A673 (cell line): ENCODE measurements at regions of chr11 and their contacts with region 1.

Region 1: DNA sequence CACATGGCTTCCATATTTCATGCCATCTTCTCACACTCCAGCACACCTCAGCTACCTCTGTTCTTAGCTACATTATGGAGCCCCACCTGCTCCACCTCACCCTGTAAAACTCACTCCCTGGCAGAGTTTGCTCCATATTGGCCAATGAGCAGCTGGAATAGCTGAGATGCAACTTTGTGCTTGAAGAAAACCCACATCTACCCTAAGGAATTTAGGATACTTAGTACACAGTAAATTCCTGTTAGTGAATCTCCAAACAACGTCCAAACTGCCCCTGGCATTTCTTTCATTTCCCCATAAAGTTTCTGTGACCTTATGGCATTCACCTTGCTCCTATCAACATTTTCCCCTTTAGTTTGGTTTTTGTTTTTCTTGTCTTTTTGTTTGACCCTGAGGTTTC is 2.2 kb upstream of the VWCE start:
- DNase-seq: no peak
- H3K4me3 ChIP-seq: no peak overlapping the region
- H3K27ac ChIP-seq: no peak overlapping the region
- H3K4me1 ChIP-seq: peaks cover 8% of the 10 kb centered on the region
- H3K27me3 ChIP-seq: no peaks in the 10 kb centered on the region
- CTCF ChIP-seq: no peak

Region 2: GRCh38 chr11:60913793-60914632 is 383.3 kb before region 1 on chr11 and contains the start of gene TMEM109:
- CTCF ChIA-PET with region 1: interaction called, 10 read pairs
- POLR2A ChIA-PET with region 1: no interaction called
- intact Hi-C with region 1: no loop called
- DNase-seq: peak; percentile 99
- H3K4me3 ChIP-seq: peak within 1 kb of the TSS; percentile 62
- H3K27ac ChIP-seq: peak within 1 kb of the TSS; percentile 89
- H3K4me1 ChIP-seq: peaks cover 28% of the 10 kb centered on the region
- H3K27me3 ChIP-seq: no peaks in the 10 kb centered on the region
- CTCF ChIP-seq: no peak
- total RNA-seq, gene TMEM109: 139 and 169 TPM in 2 replicates

Region 3: GRCh38 chr11:61709110-61709509 is 411.8 kb after region 1 on chr11:
- CTCF ChIA-PET with region 1: no interaction called
- POLR2A ChIA-PET with region 1: interaction called, 11 read pairs
- intact Hi-C with region 1: no loop called
- DNase-seq: no peak
- H3K4me3 ChIP-seq: no peak overlapping the region
- H3K27ac ChIP-seq: no peak overlapping the region
- H3K4me1 ChIP-seq: peaks cover 12% of the 10 kb centered on the region
- H3K27me3 ChIP-seq: no peaks in the 10 kb centered on the region
- CTCF ChIP-seq: no peak